Activated CD4-positive, alpha-beta memory T cell treated with anti-CD3 and anti-CD28 coated beads for 36 hours (primary cell): ENCODE measurements at regions of chr15 and their contacts with region 1.

Region 1: DNA sequence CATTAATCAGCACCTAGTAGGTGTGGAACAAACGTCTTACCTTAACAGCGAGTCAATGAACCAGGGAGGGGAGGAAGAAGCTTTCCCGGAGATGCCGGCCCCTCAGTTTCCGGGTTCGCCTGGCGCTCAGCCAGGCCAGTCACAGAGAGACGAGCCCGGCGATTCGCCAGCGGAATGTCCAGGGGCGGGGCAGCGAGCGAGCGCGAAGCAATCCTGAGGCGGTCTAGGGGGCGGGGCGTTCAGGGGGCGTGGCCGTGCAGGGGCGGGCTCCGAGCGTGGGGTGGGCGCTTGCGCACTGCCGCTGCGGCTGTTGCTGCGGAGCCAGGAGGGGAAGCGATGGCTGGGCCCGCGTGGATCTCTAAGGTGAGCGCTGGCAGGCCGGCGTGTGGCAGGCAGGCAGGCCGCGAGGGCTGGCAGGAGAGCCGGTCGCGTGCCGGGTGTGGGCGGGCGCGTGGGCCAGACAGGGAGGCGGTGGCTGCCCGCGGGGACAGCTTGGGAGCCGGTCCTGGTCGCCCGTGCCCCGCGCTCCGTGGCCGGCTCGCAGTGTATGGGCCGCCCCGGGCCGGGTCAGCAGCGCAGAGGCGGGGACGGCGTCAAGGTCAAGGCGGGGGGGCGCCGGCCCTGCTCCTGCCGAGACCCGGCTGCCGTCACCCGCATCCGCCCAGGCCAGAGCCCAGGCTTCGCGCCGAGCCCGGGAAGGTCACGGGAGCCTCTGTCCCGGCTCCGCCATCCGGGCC is at the start of gene IDH3A:
- DNase-seq: peak; percentile 100
- H3K4me3 Mint-ChIP-seq: peak within 1 kb of the TSS; percentile 94
- H3K27ac Mint-ChIP-seq: peak within 1 kb of the TSS; percentile 86
- H3K4me1 Mint-ChIP-seq: peaks cover 40% of the 10 kb centered on the region
- H3K27me3 Mint-ChIP-seq: no peaks in the 10 kb centered on the region
- total RNA-seq, gene IDH3A: 106 to 111 TPM

Region 2: GRCh38 chr15:77992356-77993222 is 156.6 kb before region 1 on chr15:
- CTCF ChIA-PET with region 1: no interaction called
- POLR2A ChIA-PET with region 1: no interaction called
- intact Hi-C with region 1: no loop called
- DNase-seq: no peak
- H3K4me3 Mint-ChIP-seq: no peak overlapping the region
- H3K27ac Mint-ChIP-seq: peak overlapping the region; percentile 33
- H3K4me1 Mint-ChIP-seq: peaks cover 17% of the 10 kb centered on the region
- H3K27me3 Mint-ChIP-seq: no peaks in the 10 kb centered on the region

Region 3: GRCh38 chr15:78131295-78132061 is 17.8 kb before region 1 on chr15 and contains the start of gene CIB2:
- CTCF ChIA-PET with region 1: interaction called, 22 read pairs
- POLR2A ChIA-PET with region 1: interaction called, 4 read pairs
- intact Hi-C with region 1: loop called (anchors 1 kb)
- DNase-seq: peak; percentile 83
- H3K4me3 Mint-ChIP-seq: peak within 1 kb of the TSS; percentile 73
- H3K27ac Mint-ChIP-seq: peak within 1 kb of the TSS; percentile 11
- H3K4me1 Mint-ChIP-seq: peaks cover 21% of the 10 kb centered on the region
- H3K27me3 Mint-ChIP-seq: no peaks in the 10 kb centered on the region
- total RNA-seq, gene CIB2: 2.0 to 2.2 TPM

Region 4: GRCh38 chr15:78167227-78167888 is 18.1 kb after region 1 on chr15:
- CTCF ChIA-PET with region 1: interaction called, 3 read pairs
- POLR2A ChIA-PET with region 1: interaction called, 3 read pairs
- intact Hi-C with region 1: loop called (anchors 1 kb)
- DNase-seq: peak; percentile 66
- H3K4me3 Mint-ChIP-seq: no peak overlapping the region
- H3K27ac Mint-ChIP-seq: peak overlapping the region; percentile 49
- H3K4me1 Mint-ChIP-seq: peaks cover 20% of the 10 kb centered on the region
- H3K27me3 Mint-ChIP-seq: no peaks in the 10 kb centered on the region